ENCODE measurements at regions of chr2 and their contacts with region 1.

Region 1: DNA sequence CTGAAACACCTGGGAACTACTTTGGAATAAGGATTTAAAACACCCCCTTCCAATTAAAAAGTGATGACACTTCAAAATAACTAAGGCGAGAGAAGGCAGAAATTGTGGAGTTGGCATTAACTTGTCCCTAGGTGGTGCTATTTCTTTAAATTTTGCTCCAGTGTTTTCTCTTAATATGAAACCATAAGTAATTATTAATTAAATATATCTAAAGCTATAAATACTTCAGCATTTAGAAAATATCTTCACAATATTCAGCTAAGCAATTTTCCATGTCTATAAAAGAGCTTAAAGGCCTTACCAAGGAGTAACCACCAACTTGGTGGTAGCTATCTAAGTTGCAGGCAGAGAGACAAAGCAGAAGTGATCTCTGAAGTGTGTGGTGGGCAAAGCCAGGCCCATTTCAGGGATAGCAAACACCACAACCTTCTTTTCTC is 186.8 kb upstream of the PGAP1 start:
- DNase-seq: no peak
- H3K4me3 ChIP-seq: no peak overlapping the region
- H3K27ac ChIP-seq: no peak overlapping the region
- H3K4me1 ChIP-seq: peaks cover 10% of the 10 kb centered on the region
- H3K27me3 ChIP-seq: no peaks in the 10 kb centered on the region
- CTCF ChIP-seq: peak; percentile 7 to 54 (median 36)
- POLR2A ChIP-seq: no peak

Region 2: GRCh38 chr2:197191177-197191939 is 78.1 kb after region 1 on chr2:
- intact Hi-C with region 1: loop called (anchors 10 kb)
- DNase-seq: no peak
- H3K4me3 ChIP-seq: no peak overlapping the region
- H3K27ac ChIP-seq: no peak overlapping the region
- H3K4me1 ChIP-seq: peaks cover 38% of the 10 kb centered on the region
- H3K27me3 ChIP-seq: no peaks in the 10 kb centered on the region
- CTCF ChIP-seq: peak; percentile 13 to 59 (median 55)
- POLR2A ChIP-seq: no peak

Region 3: GRCh38 chr2:197378494-197379307 is 265.4 kb after region 1 on chr2:
- intact Hi-C with region 1: loop called (anchors 10 kb)
- DNase-seq: no peak
- H3K4me3 ChIP-seq: no peak overlapping the region
- H3K27ac ChIP-seq: no peak overlapping the region
- H3K4me1 ChIP-seq: peaks cover 6% of the 10 kb centered on the region
- H3K27me3 ChIP-seq: no peaks in the 10 kb centered on the region
- CTCF ChIP-seq: peak; percentile 30 to 71 (median 65)
- POLR2A ChIP-seq: no peak

Region 4: GRCh38 chr2:198296665-198297308 is 1183.5 kb after region 1 on chr2:
- intact Hi-C with region 1: no loop called
- DNase-seq: no peak
- H3K4me3 ChIP-seq: no peak overlapping the region
- H3K27ac ChIP-seq: no peak overlapping the region
- H3K4me1 ChIP-seq: no peaks in the 10 kb centered on the region
- H3K27me3 ChIP-seq: no peaks in the 10 kb centered on the region
- CTCF ChIP-seq: peak; percentile 69 to 78 (median 69)
- POLR2A ChIP-seq: no peak

Measured in vagina (tissue), 2 donors.